CD4-positive, alpha-beta T cell (primary cell): ENCODE measurements at regions of chr5 and their contacts with region 1.

Region 1: GRCh38 chr5:160342403-160342941 is 28.0 kb downstream of the C1QTNF2 start:
- DNase-seq: no peak
- ATAC-seq: no peak
- H3K4me3 ChIP-seq: no peak overlapping the region
- H3K4me3 Mint-ChIP-seq: no peak overlapping the region
- H3K27ac ChIP-seq: no peak overlapping the region
- H3K27ac Mint-ChIP-seq: no peak overlapping the region
- H3K4me1 ChIP-seq: peaks cover 7% of the 10 kb centered on the region
- H3K4me1 Mint-ChIP-seq: no peaks in the 10 kb centered on the region
- H3K27me3 ChIP-seq: no peaks in the 10 kb centered on the region
- H3K27me3 Mint-ChIP-seq: no peaks in the 10 kb centered on the region
- CTCF ChIP-seq: no peak

Region 2: DNA sequence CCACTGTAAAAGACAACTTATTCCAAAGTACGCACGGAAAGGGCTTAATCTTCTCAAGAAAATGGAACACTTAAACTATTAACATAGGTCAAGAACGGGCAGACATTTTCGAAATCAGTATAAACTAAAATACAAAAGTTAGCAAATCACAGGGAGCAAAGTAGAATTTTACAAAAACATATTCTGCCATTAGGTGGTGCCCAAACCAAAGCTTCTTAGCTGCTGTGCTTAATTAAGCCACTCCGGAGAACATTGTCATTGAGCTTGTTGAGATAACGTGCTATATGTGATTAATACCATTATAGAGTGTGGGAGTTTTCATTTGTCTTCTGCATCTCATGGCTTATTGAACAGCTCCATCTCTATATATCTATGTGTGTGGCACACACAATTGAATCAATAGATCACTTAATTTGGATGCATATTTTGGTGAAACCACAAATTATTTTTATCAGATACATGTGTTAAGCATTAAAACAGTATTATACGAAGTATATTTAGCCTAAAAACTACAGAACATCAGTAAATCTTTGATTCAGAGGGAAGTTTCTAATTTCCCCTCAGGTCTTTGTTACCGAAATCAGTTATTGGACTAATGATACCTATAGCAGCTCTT is 1055.9 kb before region 1 on chr5:
- CTCF ChIA-PET with region 1: no interaction called
- POLR2A ChIA-PET with region 1: no interaction called
- intact Hi-C with region 1: loop called (anchors 2 to 10 kb)
- DNase-seq: peak in 4 of 14 experiments; percentile 10 to 66 (median 52)
- ATAC-seq: peak; percentile 62
- H3K4me3 ChIP-seq: no peak overlapping the region
- H3K4me3 Mint-ChIP-seq: no peak overlapping the region
- H3K27ac ChIP-seq: no peak overlapping the region
- H3K27ac Mint-ChIP-seq: no peak overlapping the region
- H3K4me1 ChIP-seq: no peaks in the 10 kb centered on the region
- H3K4me1 Mint-ChIP-seq: no peaks in the 10 kb centered on the region
- H3K27me3 ChIP-seq: no peaks in the 10 kb centered on the region
- H3K27me3 Mint-ChIP-seq: no peaks in the 10 kb centered on the region
- CTCF ChIP-seq: peak; percentile 68

Region 3: GRCh38 chr5:159444441-159445082 is 897.9 kb before region 1 on chr5:
- CTCF ChIA-PET with region 1: no interaction called
- POLR2A ChIA-PET with region 1: no interaction called
- intact Hi-C with region 1: loop called in 1 of 2 experiments (anchors 5 kb)
- DNase-seq: peak in 3 of 14 experiments; percentile 53 to 65 (median 55)
- ATAC-seq: no peak
- H3K4me3 ChIP-seq: no peak overlapping the region
- H3K4me3 Mint-ChIP-seq: no peak overlapping the region
- H3K27ac ChIP-seq: no peak overlapping the region
- H3K27ac Mint-ChIP-seq: no peak overlapping the region
- H3K4me1 ChIP-seq: no peaks in the 10 kb centered on the region
- H3K4me1 Mint-ChIP-seq: no peaks in the 10 kb centered on the region
- H3K27me3 ChIP-seq: no peaks in the 10 kb centered on the region
- H3K27me3 Mint-ChIP-seq: no peaks in the 10 kb centered on the region
- CTCF ChIP-seq: peak; percentile 32

Region 4: DNA sequence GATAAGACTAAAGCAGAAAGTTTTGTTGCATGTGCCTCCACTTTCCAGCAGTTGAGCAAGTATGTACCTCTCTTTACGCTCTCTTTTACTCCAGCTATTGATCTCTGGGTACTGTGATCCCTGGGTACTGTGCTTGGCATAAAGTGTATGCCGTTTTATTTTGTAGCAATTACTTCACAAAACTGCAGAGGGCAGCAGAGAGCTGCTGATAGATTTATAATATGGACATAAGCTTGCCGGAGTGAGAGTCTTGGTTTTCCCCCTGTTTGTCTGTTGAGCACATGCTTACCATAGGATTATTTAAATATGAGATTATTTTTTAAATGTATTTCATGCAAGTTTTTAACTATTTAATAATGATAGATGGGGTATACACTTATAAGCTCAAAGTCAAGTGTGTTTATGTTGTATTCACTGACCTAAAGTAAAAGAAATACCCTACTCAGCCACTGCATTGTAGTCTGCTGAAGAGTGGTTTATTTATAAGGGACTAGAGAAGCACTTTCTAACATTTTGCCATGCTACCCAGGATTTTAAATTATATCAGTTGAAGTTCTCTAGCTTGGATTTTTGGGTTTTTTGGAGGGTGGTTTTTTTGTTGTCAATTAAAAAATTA is 320.5 kb before region 1 on chr5:
- CTCF ChIA-PET with region 1: interaction called, 15 read pairs
- POLR2A ChIA-PET with region 1: interaction called, 5 read pairs
- intact Hi-C with region 1: loop called (anchors 1 kb)
- DNase-seq: peak in 13 of 14 experiments; percentile 4 to 83 (median 37)
- ATAC-seq: peak; percentile 94
- H3K4me3 ChIP-seq: no peak overlapping the region
- H3K4me3 Mint-ChIP-seq: no peak overlapping the region
- H3K27ac ChIP-seq: no peak overlapping the region
- H3K27ac Mint-ChIP-seq: peak overlapping the region; percentile 35
- H3K4me1 ChIP-seq: peaks cover 10% of the 10 kb centered on the region
- H3K4me1 Mint-ChIP-seq: peaks cover 42% of the 10 kb centered on the region
- H3K27me3 ChIP-seq: no peaks in the 10 kb centered on the region
- H3K27me3 Mint-ChIP-seq: no peaks in the 10 kb centered on the region
- CTCF ChIP-seq: peak; percentile 88

Region 5: DNA sequence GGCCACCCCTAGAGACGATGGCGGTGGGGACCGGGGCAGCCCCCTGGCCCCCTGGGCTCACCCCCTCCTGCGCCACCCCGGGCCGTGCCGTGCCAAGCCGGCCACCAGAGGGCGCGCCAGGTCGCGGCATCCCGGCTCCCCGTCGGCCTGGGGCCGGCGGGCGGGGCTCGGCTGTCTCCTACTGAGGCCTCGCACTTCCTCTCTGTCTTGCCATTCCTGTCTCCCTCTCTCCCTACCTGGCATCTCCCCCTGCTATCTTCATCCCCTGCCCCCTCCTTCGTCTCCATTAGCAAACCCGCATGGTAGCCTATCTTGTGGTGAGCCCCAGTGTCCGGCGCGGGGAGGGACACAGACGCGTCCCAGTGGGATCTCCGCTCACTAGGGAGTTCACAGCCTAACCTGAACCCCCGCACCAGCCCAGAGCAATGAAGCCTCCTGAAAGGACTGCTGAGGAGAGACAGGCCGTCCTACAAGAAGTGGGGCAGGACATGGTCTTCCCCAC is 143.0 kb before region 1 on chr5:
- CTCF ChIA-PET with region 1: no interaction called
- POLR2A ChIA-PET with region 1: no interaction called
- intact Hi-C with region 1: loop called (anchors 1 to 2 kb)
- DNase-seq: peak; percentile 45 to 82 (median 63)
- ATAC-seq: peak; percentile 97
- H3K4me3 ChIP-seq: peak overlapping the region; percentile 51
- H3K4me3 Mint-ChIP-seq: peak overlapping the region; percentile 78
- H3K27ac ChIP-seq: no peak overlapping the region
- H3K27ac Mint-ChIP-seq: no peak overlapping the region
- H3K4me1 ChIP-seq: peaks cover 11% of the 10 kb centered on the region
- H3K4me1 Mint-ChIP-seq: no peaks in the 10 kb centered on the region
- H3K27me3 ChIP-seq: peaks cover 0 to 5% of the 10 kb centered on the region in 2 experiments
- H3K27me3 Mint-ChIP-seq: peaks cover 21% of the 10 kb centered on the region
- CTCF ChIP-seq: peak; percentile 82